ENCODE measurements at regions of chr3 and their contacts with region 1.

Region 1: DNA sequence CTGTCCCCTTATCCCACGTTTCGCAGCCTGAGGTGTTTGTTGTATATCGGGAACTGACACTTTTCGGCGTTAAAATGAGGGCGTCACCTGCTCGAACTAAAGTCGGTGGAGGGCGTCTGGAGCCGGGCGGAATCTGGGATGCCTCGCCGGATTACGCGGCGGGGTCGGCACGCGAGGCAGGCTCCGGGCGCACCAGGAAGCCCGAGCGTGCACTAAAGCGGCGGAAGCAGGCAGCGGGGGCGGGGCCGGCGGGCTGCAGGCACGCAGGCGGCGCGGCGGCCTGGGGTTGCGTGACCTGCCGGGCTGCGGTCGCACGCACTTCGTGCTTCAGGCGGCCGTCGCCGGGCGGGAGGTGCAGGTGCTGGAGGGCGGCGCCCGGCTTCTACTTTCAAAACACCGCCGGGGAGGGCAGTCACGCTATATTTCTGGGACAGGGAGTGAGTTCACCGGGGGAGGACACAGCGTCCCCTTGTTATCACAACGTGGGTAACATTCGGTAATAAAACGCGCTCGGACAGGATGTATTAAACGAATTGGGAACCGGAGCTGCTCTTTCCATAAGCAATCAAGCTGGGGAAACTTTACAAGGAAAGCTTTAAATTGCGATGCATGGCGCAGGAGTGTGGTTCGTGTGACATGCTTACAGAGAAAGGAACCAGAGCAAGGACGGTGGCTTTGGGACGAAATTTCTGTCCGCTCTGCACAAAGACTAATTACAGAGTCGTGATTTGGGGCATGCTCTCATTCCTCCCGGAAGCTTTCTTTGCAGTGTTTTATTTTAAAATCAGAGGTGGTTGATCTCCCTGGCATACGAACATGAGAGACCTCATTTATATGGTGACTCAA is 9.1 kb upstream of the LEKR1 start:
- DNase-seq: peak; percentile 89
- ATAC-seq: peak; percentile 77
- H3K4me3 Mint-ChIP-seq: peak overlapping the region; percentile 80
- H3K27ac Mint-ChIP-seq: peak overlapping the region; percentile 98
- H3K4me1 Mint-ChIP-seq: peaks cover 47% of the 10 kb centered on the region
- H3K27me3 Mint-ChIP-seq: no peaks in the 10 kb centered on the region
- CTCF ChIP-seq: no peak

Region 2: DNA sequence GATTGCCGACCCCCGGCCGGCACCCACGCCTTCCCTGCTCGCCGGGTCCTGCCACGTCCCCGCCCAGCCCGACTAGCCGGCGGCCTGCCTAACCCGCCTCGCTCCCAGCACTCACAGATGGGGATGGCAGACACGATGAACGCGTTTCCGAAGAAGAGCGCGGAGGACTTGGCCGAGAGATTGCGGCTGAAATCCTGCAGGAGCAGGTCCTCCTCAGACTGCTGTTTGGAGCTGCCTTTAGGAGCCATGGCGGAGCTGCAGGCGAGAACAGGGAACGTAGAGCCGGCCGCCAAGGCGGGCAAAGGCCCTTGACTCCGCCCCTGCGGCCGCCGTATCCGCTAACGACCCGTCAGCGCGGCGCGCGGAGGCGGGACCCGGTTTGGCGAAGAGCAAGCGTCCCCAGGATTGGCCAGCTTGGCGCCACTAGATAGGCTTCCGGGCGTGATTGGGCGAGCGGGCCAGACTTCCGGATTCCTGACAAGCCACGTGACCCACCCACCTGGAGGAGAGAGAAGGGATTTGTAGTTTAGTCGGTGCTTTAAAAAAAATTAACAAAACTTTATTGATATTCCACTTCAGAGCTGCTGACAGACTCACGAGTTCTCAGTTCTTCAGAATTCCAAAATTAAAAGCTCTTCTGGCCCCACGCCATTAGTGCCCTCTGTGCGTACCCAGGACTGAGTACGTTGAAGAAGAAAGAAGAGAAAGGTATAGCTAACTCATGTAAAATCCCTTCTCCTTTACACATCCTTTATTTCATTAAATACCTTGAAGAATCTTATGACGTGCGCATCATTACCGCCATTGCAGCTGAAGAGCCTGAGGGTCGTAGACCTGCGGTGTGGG is 262.0 kb before region 1 on chr3 and contains the start of gene SSR3:
- CTCF ChIA-PET with region 1: no interaction called
- POLR2A ChIA-PET with region 1: no interaction called
- intact Hi-C with region 1: loop called (anchors 10 kb)
- DNase-seq: peak; percentile 100
- ATAC-seq: peak; percentile 100
- H3K4me3 Mint-ChIP-seq: peak within 1 kb of the TSS; percentile 94
- H3K27ac Mint-ChIP-seq: peak within 1 kb of the TSS; percentile 95
- H3K4me1 Mint-ChIP-seq: peaks cover 39% of the 10 kb centered on the region
- H3K27me3 Mint-ChIP-seq: no peaks in the 10 kb centered on the region
- CTCF ChIP-seq: no peak
- total RNA-seq, gene SSR3: 175 TPM

Region 3: DNA sequence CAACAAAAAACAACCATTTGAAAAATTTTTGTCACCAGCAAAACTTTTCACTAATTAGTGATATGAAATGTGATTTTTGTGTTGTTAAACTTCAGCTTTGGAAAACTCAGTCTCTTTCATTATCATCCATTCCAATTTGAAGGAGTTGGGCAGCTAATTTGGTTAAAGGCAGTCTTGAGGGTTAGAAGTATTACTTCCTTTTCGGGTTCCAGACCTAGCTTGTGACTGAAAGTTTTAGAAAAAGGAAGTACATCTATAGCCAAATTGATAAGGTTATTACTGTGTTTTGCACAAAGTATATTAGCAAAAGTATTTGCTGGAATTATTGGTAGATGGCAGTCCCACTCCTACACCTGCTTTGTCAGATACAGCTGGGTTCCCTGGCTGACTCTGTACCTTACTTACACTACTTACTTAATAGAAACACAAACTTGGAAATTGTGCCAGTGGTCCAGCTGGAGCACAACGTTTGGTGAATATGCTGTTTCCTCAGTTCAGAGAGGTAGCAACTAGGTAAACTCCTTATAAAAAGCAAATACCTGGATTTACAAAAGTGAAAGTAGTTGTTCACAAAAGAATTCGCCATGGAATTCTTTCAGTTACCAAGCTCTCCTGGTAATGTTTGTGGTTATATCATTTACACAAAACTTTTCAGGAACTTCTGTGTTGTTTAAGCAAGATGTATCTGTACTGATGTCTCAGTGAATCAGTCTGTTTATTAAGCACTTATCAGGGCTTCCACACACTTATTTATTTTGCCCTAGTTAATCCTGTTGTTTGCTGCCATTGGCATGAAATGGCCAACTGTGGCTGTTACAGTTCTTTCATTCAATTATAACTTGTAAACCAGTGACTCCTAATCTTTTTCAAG is 111.0 kb before region 1 on chr3:
- CTCF ChIA-PET with region 1: no interaction called
- POLR2A ChIA-PET with region 1: no interaction called
- intact Hi-C with region 1: no loop called
- DNase-seq: no peak
- ATAC-seq: no peak
- H3K4me3 Mint-ChIP-seq: no peak overlapping the region
- H3K27ac Mint-ChIP-seq: no peak overlapping the region
- H3K4me1 Mint-ChIP-seq: peaks cover 8% of the 10 kb centered on the region
- H3K27me3 Mint-ChIP-seq: no peaks in the 10 kb centered on the region
- CTCF ChIP-seq: no peak

Region 4: GRCh38 chr3:156847752-156848448 is 30.9 kb after region 1 on chr3:
- CTCF ChIA-PET with region 1: no interaction called
- POLR2A ChIA-PET with region 1: no interaction called
- intact Hi-C with region 1: no loop called
- DNase-seq: no peak
- ATAC-seq: no peak
- H3K4me3 Mint-ChIP-seq: no peak overlapping the region
- H3K27ac Mint-ChIP-seq: no peak overlapping the region
- H3K4me1 Mint-ChIP-seq: no peaks in the 10 kb centered on the region
- H3K27me3 Mint-ChIP-seq: no peaks in the 10 kb centered on the region
- CTCF ChIP-seq: no peak

Region 5: DNA sequence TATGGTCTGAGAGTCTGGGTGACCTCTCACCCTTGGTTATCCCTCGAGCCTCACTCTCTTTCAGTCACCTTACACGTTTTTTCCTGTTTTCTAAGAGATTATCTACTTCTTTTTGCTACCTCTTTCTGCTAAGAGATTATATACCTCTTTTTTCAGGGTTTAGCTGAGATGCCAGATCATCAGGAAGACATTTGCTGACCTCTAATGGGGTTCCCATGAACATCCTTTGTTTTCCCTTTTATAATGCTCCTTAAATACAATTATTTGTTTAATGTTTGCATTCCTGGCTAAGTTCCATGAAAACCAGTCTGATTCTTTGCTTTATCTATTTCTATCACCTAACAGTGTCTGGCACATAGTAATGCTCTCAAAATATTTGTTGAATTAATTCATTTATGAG is 48.7 kb after region 1 on chr3:
- CTCF ChIA-PET with region 1: no interaction called
- POLR2A ChIA-PET with region 1: no interaction called
- intact Hi-C with region 1: no loop called
- DNase-seq: no peak
- ATAC-seq: no peak
- H3K4me3 Mint-ChIP-seq: no peak overlapping the region
- H3K27ac Mint-ChIP-seq: no peak overlapping the region
- H3K4me1 Mint-ChIP-seq: no peaks in the 10 kb centered on the region
- H3K27me3 Mint-ChIP-seq: no peaks in the 10 kb centered on the region
- CTCF ChIP-seq: no peak

Region 6: DNA sequence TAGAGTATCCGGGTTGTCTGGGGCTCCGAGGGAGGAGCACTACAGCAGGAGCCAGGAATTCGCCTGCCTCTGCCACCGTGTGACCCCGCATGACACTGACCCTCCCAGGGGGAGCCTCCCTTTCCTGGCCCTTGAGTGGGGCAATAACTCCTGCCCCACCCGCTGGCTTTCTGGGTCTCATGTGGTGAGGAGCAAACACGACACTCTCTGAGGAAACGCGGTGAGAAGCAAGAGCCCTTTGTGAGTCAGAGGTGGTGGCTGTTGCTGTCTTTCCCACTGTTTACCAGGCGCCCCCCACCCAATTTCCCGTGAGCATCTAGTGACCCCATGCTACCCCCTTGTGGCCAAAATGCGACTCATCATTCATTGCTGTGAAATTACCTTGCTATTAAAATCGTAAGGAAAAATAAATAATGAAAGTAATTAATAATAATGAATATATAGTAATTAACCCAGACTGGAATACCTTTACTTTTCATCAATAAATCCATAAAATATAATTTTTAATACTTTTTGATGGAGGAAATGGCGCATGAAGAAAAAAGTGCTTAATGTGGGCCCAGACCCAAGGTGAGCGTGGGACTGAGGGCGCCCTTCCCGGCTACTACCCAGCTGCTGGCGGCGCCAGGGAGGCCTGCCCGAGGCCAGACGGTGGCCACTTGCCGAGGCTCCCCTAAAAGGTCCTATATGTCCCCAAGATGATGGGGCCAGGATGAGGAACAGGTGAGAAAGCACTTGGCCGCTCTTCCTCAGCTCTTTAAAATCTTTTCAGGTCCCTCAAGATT is 313.6 kb after region 1 on chr3:
- CTCF ChIA-PET with region 1: no interaction called
- POLR2A ChIA-PET with region 1: interaction called, 3 read pairs
- intact Hi-C with region 1: loop called (anchors 10 kb)
- DNase-seq: peak; percentile 90
- ATAC-seq: peak; percentile 26
- H3K4me3 Mint-ChIP-seq: peak overlapping the region; percentile 50
- H3K27ac Mint-ChIP-seq: peak overlapping the region; percentile 96
- H3K4me1 Mint-ChIP-seq: peaks cover 74% of the 10 kb centered on the region
- H3K27me3 Mint-ChIP-seq: no peaks in the 10 kb centered on the region
- CTCF ChIP-seq: peak; percentile 77

Measured in activated CD8-positive, alpha-beta T cell treated with anti-CD3 and anti-CD28 coated beads for 36 hours (primary cell).